WTC11 (cell line): ENCODE measurements at regions of chr1 and their contacts with region 1.

Region 1: GRCh38 chr1:153946622-153947241 is at the start of gene DENND4B:
- DNase-seq: peak; percentile 91
- ATAC-seq: peak; percentile 93
- H3K4me3 Mint-ChIP-seq: peak within 1 kb of the TSS; percentile 81
- H3K27ac Mint-ChIP-seq: peak within 1 kb of the TSS; percentile 8
- H3K4me1 Mint-ChIP-seq: peaks cover 13% of the 10 kb centered on the region
- H3K27me3 Mint-ChIP-seq: no peaks in the 10 kb centered on the region
- CTCF ChIP-seq: peak; percentile 85
- total RNA-seq, gene DENND4B: 88.9 to 93.9 TPM (median 93.1 TPM) in 3 replicates

Region 2: GRCh38 chr1:153796791-153797659 is 149.7 kb before region 1 on chr1:
- CTCF ChIA-PET with region 1: interaction called, 20 read pairs
- POLR2A ChIA-PET with region 1: no interaction called
- DNase-seq: peak; percentile 91
- ATAC-seq: peak; percentile 60
- H3K4me3 Mint-ChIP-seq: no peak overlapping the region
- H3K27ac Mint-ChIP-seq: peak overlapping the region; percentile 54
- H3K4me1 Mint-ChIP-seq: peaks cover 25% of the 10 kb centered on the region
- H3K27me3 Mint-ChIP-seq: no peaks in the 10 kb centered on the region; the same call in 1 of the 2 replicates
- CTCF ChIP-seq: peak; percentile 95

Region 3: GRCh38 chr1:153928791-153929341 is 17.9 kb before region 1 on chr1:
- CTCF ChIA-PET with region 1: interaction called, 24 read pairs
- POLR2A ChIA-PET with region 1: interaction called, 6 read pairs
- DNase-seq: no peak
- ATAC-seq: no peak
- H3K4me3 Mint-ChIP-seq: no peak overlapping the region
- H3K27ac Mint-ChIP-seq: peak overlapping the region; percentile 37; the same call in 1 of the 2 replicates
- H3K4me1 Mint-ChIP-seq: peaks cover under 1% of the 10 kb centered on the region
- H3K27me3 Mint-ChIP-seq: no peaks in the 10 kb centered on the region
- CTCF ChIP-seq: no peak

Region 4: GRCh38 chr1:153967082-153968000 is 20.6 kb after region 1 on chr1 and contains the start of gene CREB3L4:
- CTCF ChIA-PET with region 1: interaction called, 27 read pairs
- POLR2A ChIA-PET with region 1: interaction called, 21 read pairs
- DNase-seq: peak; percentile 92
- ATAC-seq: peak; percentile 79
- H3K4me3 Mint-ChIP-seq: peak within 1 kb of the TSS; percentile 80
- H3K27ac Mint-ChIP-seq: peak within 1 kb of the TSS; percentile 98
- H3K4me1 Mint-ChIP-seq: peaks cover 31% of the 10 kb centered on the region
- H3K27me3 Mint-ChIP-seq: no peaks in the 10 kb centered on the region
- CTCF ChIP-seq: no peak
- total RNA-seq, gene CREB3L4: 33.1 to 35.2 TPM (median 34.6 TPM) in 3 replicates

Region 5: DNA sequence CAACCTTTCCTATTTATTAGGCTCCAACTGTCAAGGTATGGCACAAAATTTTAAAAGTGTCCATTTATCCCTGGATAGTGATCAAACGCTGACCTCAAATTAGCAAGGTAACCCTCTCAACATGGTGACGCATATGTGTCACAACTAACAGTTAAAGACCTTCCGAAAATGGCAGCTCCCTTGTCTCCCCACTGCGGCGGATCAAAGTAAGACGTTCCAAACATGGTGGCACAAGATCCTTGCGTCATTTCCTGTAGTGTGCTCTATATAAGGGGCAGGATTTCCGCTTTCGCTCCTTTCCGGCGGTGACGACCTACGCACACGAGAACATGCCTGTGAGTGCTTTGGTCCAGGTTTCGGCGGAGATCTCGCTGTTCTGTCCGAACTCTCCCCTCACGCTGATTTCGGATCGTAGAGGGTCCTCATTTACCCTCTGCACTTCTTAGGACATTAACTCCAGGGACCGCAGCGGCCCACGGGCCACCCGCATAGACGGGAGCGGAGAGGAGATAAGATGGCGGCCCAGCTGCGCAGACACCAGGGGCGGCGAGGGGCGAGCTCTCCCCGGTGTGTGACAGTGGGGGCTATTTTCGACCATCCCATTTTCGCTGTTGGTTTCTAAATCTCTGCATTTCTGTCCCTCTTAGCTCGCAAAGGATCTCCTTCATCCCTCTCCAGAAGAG is 43.9 kb after region 1 on chr1 and contains the start of gene RPS27:
- CTCF ChIA-PET with region 1: interaction called, 15 read pairs
- POLR2A ChIA-PET with region 1: interaction called, 4 read pairs
- DNase-seq: peak; percentile 83
- ATAC-seq: peak; percentile 38
- H3K4me3 Mint-ChIP-seq: peak within 1 kb of the TSS; percentile 97
- H3K27ac Mint-ChIP-seq: peak within 1 kb of the TSS; percentile 98
- H3K4me1 Mint-ChIP-seq: peaks cover 29% of the 10 kb centered on the region
- H3K27me3 Mint-ChIP-seq: no peaks in the 10 kb centered on the region
- CTCF ChIP-seq: no peak
- total RNA-seq, gene RPS27: 2,141 to 2,438 TPM (median 2,292 TPM) in 3 replicates